ENCODE measurements at regions of chr7 and their contacts with region 1.

Region 1: DNA sequence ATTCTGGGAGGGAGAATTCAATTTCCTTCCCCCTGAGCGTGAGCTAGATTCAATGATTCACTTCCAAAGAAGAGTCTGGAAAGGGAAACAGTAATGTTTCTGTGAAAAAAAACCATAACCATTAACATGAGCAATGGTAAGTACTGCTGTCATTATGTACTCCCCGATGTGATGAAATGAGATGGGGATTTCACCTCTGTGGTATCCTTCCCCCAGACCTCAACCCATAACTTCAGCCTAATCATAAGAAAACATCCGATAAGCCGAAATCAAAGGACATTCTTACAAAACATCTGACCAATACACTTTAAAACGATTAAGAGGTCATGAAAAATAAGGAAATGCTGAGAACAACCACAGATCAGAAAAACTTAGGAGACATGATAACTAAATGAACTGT is 27.2 kb downstream of the EZH2 start:
- DNase-seq: no peak
- ATAC-seq: no peak
- H3K4me3 Mint-ChIP-seq: no peak overlapping the region
- H3K27ac Mint-ChIP-seq: peak overlapping the region; percentile 47; the same call in 1 of the 2 replicates
- H3K4me1 Mint-ChIP-seq: peaks cover 28% of the 10 kb centered on the region
- H3K27me3 Mint-ChIP-seq: no peaks in the 10 kb centered on the region
- CTCF ChIP-seq: no peak

Region 2: DNA sequence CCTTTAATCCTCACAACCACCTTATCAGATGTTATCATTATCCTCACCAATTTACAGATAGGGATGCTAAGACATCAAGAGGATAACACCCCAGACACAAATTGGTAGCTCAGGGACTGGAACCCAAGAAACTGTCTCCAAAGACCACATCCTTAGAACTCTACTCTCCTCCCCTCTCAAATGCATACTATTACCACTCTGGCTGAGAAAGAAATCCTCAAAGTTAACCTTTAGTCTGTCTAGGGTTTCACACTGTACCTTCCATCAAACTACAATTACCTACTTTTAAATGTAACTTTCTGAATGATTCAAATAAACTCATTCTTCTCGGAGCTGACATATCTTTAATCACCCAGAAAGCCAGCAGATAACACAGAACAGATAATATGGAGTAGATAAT is 20.6 kb after region 1 on chr7:
- CTCF ChIA-PET with region 1: interaction called, 12 read pairs
- POLR2A ChIA-PET with region 1: no interaction called
- DNase-seq: no peak
- ATAC-seq: no peak
- H3K4me3 Mint-ChIP-seq: no peak overlapping the region
- H3K27ac Mint-ChIP-seq: peak overlapping the region; percentile 89
- H3K4me1 Mint-ChIP-seq: peaks cover 34% of the 10 kb centered on the region
- H3K27me3 Mint-ChIP-seq: no peaks in the 10 kb centered on the region
- CTCF ChIP-seq: no peak

Region 3: DNA sequence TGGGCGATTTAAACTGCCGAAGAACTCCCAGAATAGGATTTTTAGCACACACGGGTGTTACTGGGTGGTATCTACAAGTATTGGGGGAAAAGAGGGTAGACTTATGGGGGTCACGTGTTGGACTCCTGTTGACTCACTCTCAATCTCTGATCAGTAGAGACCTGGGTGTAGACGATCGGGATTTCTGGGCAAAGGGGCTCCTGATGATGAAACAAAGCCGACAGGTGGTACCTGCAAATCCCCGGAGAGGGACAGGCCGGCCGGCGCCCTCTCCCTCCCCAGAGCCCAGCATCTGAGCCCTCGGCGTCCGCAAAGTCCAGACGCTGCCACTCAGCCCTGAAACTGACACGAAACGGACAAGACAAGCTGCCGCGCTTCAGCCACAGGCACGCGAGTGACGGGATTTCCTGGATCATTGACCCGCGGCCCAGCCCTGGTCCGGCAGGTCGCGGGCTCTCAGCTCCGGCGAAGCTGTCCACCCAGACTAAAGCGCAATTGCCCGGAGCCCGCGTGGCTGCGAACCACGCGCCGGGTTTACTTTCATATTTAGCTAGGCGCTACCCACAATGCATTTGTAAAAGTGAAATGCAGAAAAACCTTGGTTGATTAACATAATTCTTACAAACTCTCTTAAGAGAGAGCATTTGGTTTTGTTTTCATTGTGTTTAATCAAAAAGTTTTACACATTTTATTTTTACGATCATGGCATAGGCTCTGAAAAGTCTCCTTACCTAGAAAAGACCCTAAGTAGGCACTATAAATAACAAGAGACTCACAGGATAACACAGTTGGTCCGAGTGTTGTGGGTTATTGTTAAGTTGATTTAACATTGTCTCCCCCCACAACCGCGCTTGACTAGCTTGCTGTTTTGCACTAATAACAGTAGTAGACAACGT is 84.1 kb after region 1 on chr7:
- CTCF ChIA-PET with region 1: interaction called, 18 read pairs
- POLR2A ChIA-PET with region 1: no interaction called
- DNase-seq: peak; percentile 62
- ATAC-seq: peak; percentile 74
- H3K4me3 Mint-ChIP-seq: peak overlapping the region; percentile 91
- H3K27ac Mint-ChIP-seq: peak overlapping the region; percentile 72
- H3K4me1 Mint-ChIP-seq: peaks cover 5% of the 10 kb centered on the region
- H3K27me3 Mint-ChIP-seq: peaks cover 4% of the 10 kb centered on the region
- CTCF ChIP-seq: no peak

Measured in WTC11 (cell line).